Activated B cell treated with CpG ODN at 0.5 μM for 24 hours (primary cell): ENCODE measurements at regions of chr9 and their contacts with region 1.

Region 1: DNA sequence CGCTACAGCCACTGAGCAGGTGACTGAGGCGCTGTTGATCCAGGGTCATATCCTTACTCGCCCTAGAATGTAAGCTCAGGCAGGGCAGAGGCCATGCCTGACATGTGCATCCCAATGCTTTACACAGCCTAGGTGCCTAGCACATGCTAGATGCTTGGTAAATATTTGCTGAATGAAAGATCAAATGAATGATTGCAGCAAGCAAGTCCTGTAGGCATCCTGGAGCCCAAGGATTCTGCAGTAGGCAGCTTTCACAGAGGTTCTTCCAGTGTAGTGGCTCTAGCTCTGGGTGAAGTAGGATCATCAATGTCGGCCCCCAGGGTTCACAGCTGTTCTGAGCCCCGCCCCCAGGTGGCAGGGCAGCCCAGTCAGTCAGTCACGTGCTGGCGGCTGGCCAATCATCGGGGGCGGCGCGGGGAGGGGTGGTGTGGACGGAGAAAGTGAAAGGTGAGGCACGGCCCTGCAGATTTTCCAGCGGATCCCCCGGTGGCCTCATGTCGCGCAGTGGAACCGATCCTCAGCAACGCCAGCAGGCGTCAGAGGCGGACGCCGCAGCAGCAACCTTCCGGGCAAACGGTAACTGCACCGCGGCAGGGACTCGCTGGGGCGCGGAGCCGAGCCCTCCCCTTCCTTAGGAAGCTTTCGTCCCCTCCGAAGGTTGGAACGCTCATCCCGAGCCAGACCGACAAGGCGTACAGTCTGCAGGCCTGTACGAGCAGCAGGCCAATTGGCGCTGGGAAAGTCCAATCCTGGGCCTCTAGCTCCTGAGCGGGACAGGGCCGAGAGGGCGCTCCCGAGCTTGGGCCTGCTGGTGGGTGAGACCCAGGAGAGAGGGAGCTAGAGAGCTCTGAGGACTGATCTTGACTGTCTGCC is at the start of gene GALT:
- DNase-seq: peak; percentile 96
- ATAC-seq: peak; percentile 96
- H3K4me3 Mint-ChIP-seq: peak within 1 kb of the TSS; percentile 92
- H3K27ac Mint-ChIP-seq: peak within 1 kb of the TSS; percentile 80
- H3K4me1 Mint-ChIP-seq: peaks cover 25% of the 10 kb centered on the region
- H3K27me3 Mint-ChIP-seq: no peaks in the 10 kb centered on the region
- CTCF ChIP-seq: no peak
- total RNA-seq, gene GALT: 55.9 and 62.5 TPM in 2 replicates

Region 2: GRCh38 chr9:34222451-34222850 is 424.0 kb before region 1 on chr9:
- CTCF ChIA-PET with region 1: no interaction called
- POLR2A ChIA-PET with region 1: no interaction called
- intact Hi-C with region 1: no loop called
- DNase-seq: no peak
- ATAC-seq: no peak
- H3K4me3 Mint-ChIP-seq: no peak overlapping the region
- H3K27ac Mint-ChIP-seq: no peak overlapping the region
- H3K4me1 Mint-ChIP-seq: no peaks in the 10 kb centered on the region
- H3K27me3 Mint-ChIP-seq: no peaks in the 10 kb centered on the region
- CTCF ChIP-seq: no peak

Region 3: DNA sequence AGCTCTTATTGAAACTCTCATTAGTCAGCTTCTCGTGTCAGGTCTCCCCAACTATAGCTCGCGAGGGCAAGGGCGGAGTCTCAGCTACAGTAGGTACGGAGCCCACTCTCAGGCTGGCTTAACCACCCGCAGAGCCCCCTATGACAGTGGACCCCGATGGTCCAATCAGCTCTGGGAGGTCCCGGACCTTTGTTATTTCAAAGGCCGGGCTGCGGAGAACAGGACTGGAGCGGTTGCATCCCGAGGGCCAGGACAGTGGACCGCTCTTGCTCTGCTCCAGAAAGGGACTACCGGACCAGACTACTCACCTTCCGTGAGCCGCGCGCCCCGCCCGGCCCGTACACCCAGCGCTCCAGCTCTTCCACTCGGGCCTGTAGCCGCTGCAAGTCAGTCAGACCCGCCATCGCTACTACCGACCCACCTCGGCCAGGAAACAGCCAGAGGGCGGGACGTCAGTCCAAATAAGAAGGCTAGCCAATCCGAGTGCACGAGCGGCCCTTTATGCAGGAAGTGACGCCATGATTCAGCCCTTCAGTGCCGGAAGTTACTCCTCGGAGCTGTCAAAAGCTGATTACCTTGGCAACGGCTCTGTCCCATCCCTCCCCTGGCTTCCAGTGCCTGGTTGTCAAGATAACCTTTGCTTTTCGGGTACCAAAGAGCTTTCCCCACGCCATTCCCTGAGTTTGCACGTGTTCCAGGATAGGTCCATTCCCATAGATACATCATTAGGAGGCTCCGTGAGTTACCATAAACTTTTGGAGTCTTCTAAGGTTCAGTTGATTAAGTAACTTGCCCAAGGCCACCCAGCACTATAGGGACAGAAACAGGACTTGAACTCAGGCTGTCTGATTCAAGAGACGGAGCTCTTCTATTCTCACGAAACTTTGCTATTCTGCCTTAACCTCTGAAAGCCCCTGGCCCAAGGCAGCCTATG is 26.1 kb before region 1 on chr9 and contains the start of gene DCTN3:
- CTCF ChIA-PET with region 1: interaction called, 7 read pairs
- POLR2A ChIA-PET with region 1: interaction called, 11 read pairs
- intact Hi-C with region 1: loop called (anchors 1 kb)
- DNase-seq: peak; percentile 69
- ATAC-seq: peak; percentile 98
- H3K4me3 Mint-ChIP-seq: peak within 1 kb of the TSS; percentile 95
- H3K27ac Mint-ChIP-seq: peak within 1 kb of the TSS; percentile 73
- H3K4me1 Mint-ChIP-seq: peaks cover 29% of the 10 kb centered on the region
- H3K27me3 Mint-ChIP-seq: peaks cover 30% of the 10 kb centered on the region
- CTCF ChIP-seq: no peak
- total RNA-seq, gene DCTN3: 63.9 and 64.3 TPM in 2 replicates

Region 4: DNA sequence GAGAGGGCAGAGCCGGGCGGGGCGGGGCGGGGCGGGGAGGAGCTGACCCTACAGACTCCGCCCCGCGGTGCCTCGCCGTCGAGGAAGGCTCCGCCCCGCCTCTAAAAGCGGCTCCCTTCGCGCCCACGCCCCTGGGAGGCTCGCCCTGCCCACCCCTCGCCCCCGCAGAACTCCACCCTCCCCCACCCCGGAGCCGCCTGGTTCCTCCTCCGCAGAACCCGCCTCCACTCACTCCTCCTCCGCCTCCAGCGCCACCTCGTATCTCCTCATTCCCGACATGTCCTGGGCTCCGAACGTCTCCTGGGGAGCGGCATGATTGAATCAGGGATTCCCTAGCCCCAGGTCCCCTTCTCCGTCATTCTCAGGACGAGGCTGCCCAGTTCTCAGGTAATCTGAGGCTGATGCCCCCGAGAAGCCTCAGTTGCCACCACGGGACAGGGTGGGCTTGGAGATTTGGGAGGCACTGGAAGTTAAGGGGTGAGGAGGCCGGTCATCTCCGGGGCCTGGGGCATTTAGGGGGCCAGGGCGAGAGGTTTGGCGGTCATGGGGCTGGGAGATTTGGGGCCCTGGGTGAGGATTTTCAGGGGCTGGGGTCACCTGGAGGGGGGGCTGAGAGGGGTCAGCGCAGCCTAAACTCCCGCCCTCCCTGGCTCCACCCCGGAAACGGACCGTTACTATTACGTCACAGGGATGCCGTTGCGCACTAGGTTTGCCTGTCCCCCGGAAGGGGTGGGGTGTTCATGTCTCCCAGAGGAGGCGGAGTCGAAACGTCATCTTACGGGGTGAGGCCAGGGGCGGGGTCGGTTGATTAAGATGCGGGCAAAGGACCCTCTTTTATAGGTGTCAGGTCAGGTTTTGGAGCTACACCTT is 19.2 kb after region 1 on chr9:
- CTCF ChIA-PET with region 1: interaction called, 11 read pairs
- POLR2A ChIA-PET with region 1: interaction called, 17 read pairs
- intact Hi-C with region 1: loop called (anchors 1 kb)
- DNase-seq: peak; percentile 75
- ATAC-seq: peak; percentile 90
- H3K4me3 Mint-ChIP-seq: peak overlapping the region; percentile 88
- H3K27ac Mint-ChIP-seq: peak overlapping the region; percentile 87
- H3K4me1 Mint-ChIP-seq: peaks cover 11% of the 10 kb centered on the region
- H3K27me3 Mint-ChIP-seq: no peaks in the 10 kb centered on the region
- CTCF ChIP-seq: no peak

Region 5: GRCh38 chr9:35111001-35111933 is 464.8 kb after region 1 on chr9:
- CTCF ChIA-PET with region 1: no interaction called
- POLR2A ChIA-PET with region 1: no interaction called
- intact Hi-C with region 1: loop called (anchors 5 kb)
- DNase-seq: peak; percentile 86
- ATAC-seq: peak; percentile 81
- H3K4me3 Mint-ChIP-seq: peak overlapping the region; percentile 83
- H3K27ac Mint-ChIP-seq: peak overlapping the region; percentile 88
- H3K4me1 Mint-ChIP-seq: peaks cover 62% of the 10 kb centered on the region
- H3K27me3 Mint-ChIP-seq: no peaks in the 10 kb centered on the region
- CTCF ChIP-seq: no peak